ENCODE measurements at regions of chr20 and their contacts with region 1.

Region 1: DNA sequence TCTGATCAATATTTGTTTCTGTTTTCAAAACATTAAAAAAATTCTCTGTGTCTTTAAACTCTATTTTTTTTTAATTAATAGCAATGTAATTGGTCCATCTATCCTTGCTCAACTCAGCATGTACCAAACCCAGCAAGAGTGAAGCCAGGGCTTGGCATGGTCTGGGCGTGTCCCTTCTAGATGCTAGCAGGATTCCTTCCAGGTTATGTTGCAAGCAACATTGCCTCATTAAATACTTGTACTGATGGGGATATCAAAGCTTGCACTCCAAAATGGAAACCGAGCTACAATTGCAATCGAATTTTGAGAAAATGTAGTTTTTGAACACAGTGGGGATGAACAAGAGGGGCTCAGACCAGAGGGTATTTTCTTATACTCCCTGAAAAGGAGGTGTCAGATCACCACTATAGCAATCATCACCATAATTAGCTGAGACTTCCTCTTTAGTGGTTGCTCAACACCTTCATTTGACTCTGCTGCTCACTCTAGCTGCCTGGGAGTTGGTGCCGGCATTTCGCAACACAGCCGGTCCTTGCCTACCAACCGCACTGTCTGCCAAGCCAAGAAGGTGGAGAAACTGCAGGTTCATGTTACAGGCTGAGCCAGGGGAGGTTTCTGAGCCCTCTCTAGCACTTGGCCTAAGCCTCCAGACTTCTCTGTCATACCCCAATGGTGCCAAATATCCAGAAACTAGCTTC is 67.8 kb upstream of the RALGAPA2 start:
- H3K4me3 Mint-ChIP-seq: no peak overlapping the region
- H3K27ac Mint-ChIP-seq: no peak overlapping the region
- H3K4me1 Mint-ChIP-seq: peaks cover 23% of the 10 kb centered on the region
- H3K27me3 Mint-ChIP-seq: no peaks in the 10 kb centered on the region

Region 2: DNA sequence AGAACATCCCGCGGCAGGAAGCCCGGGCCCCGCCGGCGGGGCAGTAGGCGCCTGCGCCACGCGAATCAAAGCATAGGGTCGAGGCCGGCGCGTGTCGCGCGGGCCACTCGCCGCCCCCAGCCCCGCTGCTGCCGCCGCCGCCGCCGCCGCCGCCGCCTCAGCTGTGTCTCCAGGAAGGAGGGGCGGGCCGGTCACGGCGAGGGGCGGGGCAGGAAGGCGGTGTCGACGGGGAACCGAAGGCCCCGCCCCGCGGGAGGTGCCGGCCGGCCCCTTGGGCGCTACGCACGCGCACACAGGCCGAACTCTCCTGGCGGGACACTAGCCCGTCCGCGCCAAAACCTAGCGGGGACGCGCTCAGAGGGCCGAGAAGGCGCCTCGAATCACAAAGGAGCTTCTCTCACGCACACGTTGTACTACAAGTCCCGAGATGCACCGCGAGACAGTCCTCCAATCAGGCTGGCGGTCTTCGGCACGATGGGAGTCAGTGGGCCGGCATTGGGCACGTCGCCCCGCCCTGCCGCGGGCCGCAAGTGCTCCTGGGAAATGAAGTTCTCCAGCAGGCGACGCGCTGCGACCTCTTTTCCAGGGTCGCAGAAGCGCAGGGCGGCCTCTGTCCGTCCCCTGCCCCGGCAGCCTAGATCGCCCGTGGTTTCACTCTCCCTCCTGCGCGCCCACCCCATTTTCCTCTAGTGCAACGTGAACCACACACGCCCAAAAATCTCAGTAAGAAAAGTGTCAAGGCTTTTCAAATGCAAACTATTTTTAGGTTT is 67.6 kb before region 1 on chr20 and contains the start of gene RALGAPA2:
- intact Hi-C with region 1: loop called (anchors 1 kb)
- H3K4me3 Mint-ChIP-seq: peak within 1 kb of the TSS; percentile 94
- H3K27ac Mint-ChIP-seq: peak within 1 kb of the TSS; percentile 95
- H3K4me1 Mint-ChIP-seq: peaks cover 40% of the 10 kb centered on the region
- H3K27me3 Mint-ChIP-seq: no peaks in the 10 kb centered on the region

Region 3: DNA sequence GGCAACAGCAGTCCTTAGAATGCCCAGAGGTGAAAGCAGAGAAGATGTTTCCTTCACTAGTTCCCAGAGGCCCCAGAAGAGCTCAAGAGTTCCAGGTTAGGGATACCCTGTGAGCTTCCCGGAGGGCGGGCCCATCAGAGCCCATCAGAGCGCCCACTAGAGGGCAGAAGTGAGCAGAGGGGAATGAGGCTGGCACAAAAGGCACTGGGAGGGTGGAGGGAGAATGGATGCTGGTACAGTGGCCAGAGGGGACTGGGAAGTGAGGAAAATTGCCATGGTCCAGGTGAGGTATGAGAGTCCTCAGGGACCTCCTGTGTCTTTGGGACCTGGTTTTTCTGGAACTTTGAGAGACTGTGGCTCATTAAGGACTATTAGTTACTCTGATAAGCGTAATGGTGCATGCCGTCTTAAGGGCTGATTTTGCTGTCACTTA is 268.6 kb after region 1 on chr20:
- intact Hi-C with region 1: no loop called
- H3K4me3 Mint-ChIP-seq: no peak overlapping the region
- H3K27ac Mint-ChIP-seq: no peak overlapping the region
- H3K4me1 Mint-ChIP-seq: no peaks in the 10 kb centered on the region
- H3K27me3 Mint-ChIP-seq: peaks cover 29% of the 10 kb centered on the region